Activated CD4-positive, alpha-beta memory T cell treated with anti-CD3 and anti-CD28 coated beads for 36 hours (primary cell): ENCODE measurements at regions of chr7 and their contacts with region 1.

Region 1: DNA sequence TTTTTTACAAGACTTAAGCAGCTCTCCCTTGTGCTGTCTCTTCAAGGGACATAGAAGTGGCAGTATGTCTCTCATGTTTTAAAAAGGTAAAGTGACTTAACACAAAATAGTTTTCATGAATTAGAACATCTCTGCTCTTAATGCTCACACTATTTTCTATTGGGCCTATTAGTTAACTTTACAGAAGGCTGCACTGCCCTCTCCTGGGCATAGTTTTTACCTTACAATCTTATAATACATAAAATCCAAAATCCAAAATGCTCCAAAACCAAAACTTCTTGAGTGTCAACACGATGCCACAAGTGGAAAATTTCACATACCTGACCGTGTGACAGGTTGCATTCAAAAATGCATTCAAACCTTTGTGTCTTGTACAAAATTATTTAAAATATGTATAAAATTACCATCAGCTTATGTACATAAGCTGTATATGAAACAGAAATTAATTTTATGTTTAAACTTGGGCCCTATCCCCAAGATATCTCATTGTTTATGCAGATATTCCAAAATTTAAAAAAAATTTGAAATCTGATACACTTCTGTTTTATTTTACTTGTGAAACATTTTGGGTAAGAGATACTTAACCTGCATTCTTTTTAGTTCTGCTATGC is 25.8 kb downstream of the TES start:
- DNase-seq: peak; percentile 46
- H3K4me3 Mint-ChIP-seq: no peak overlapping the region
- H3K27ac Mint-ChIP-seq: no peak overlapping the region
- H3K4me1 Mint-ChIP-seq: peaks cover 61% of the 10 kb centered on the region
- H3K27me3 Mint-ChIP-seq: no peaks in the 10 kb centered on the region

Region 2: GRCh38 chr7:116138202-116138801 is 97.8 kb before region 1 on chr7:
- CTCF ChIA-PET with region 1: interaction called, 10 read pairs
- POLR2A ChIA-PET with region 1: no interaction called
- intact Hi-C with region 1: no loop called
- DNase-seq: no peak
- H3K4me3 Mint-ChIP-seq: no peak overlapping the region
- H3K27ac Mint-ChIP-seq: no peak overlapping the region
- H3K4me1 Mint-ChIP-seq: peaks cover 3% of the 10 kb centered on the region
- H3K27me3 Mint-ChIP-seq: peaks cover 2% of the 10 kb centered on the region

Region 3: DNA sequence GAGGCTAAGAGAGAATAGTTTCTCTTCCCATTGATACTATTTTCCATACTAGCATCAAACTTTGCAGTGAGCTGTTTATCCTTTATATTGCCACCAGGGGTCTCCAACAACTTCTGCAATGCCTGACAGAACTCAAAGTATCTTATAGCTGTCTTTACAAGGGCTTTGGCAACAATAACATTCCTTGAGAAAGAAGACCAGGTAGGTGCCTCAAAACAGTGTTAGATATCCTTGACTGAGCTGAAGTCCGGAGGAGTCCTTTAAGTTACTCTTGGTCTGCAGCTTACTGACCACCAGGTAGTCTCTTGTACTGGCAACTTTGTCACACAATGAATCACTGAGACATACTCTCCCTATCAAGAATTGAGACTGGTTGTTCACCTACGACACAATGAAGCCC is 55.8 kb before region 1 on chr7:
- CTCF ChIA-PET with region 1: interaction called, 399 read pairs
- POLR2A ChIA-PET with region 1: interaction called, 6 read pairs
- intact Hi-C with region 1: loop called (anchors 1 kb)
- DNase-seq: peak; percentile 15
- H3K4me3 Mint-ChIP-seq: no peak overlapping the region
- H3K27ac Mint-ChIP-seq: no peak overlapping the region
- H3K4me1 Mint-ChIP-seq: no peaks in the 10 kb centered on the region
- H3K27me3 Mint-ChIP-seq: no peaks in the 10 kb centered on the region

Region 4: GRCh38 chr7:116211006-116211912 is 24.9 kb before region 1 on chr7:
- CTCF ChIA-PET with region 1: interaction called, 75 read pairs
- POLR2A ChIA-PET with region 1: interaction called, 18 read pairs
- intact Hi-C with region 1: loop called (anchors 1 kb)
- DNase-seq: peak; percentile 86
- H3K4me3 Mint-ChIP-seq: peak overlapping the region; percentile 96
- H3K27ac Mint-ChIP-seq: peak overlapping the region; percentile 99
- H3K4me1 Mint-ChIP-seq: peaks cover 55% of the 10 kb centered on the region
- H3K27me3 Mint-ChIP-seq: no peaks in the 10 kb centered on the region

Region 5: GRCh38 chr7:116224492-116225098 is 11.5 kb before region 1 on chr7:
- CTCF ChIA-PET with region 1: interaction called, 40 read pairs
- POLR2A ChIA-PET with region 1: no interaction called
- intact Hi-C with region 1: no loop called
- DNase-seq: no peak
- H3K4me3 Mint-ChIP-seq: peak overlapping the region; percentile 45
- H3K27ac Mint-ChIP-seq: peak overlapping the region; percentile 73
- H3K4me1 Mint-ChIP-seq: peaks cover 77% of the 10 kb centered on the region
- H3K27me3 Mint-ChIP-seq: no peaks in the 10 kb centered on the region